ENCODE measurements at regions of chr5 and their contacts with region 1.

Region 1: DNA sequence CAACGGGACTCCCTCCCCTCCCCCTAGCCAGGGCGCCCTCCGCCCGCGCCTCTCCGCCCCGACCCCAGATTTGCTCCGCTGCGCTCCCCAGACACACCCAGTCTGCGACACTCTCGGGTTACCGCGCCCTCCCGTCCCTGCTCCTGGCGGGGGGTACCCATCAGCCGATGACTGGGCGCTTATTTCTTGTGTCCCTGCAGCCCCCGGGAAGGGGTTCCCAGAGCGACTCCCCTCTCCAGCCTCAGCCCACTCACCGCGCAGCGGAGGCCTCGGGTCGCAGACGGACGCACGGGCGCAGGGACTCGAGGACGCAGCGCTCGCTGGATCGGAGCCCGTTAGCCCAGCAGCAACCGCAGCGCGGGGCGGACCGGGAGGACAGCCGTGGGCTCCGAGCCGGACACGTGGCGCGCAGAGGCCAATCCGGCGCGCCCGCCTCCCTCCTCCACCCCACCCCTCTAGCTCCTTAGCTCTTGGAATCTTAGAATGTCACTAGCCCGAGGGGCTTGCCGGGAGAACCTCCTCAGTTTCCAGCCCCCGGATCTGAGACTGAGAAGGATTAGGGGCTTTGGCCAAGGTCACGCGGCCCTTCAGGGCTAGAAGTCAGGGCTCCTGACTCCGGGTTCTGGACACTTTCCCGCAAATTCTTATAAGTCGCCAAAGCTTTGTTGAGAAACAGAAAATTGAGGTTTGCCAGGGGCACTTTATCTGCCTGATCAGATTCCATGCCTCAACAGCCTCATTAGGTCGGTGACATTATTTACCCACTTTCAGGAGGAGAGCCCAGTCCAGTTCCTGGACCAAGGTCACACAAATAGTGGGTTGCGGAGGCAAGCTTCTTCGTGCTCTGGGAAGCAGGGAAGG is at the start of gene ANXA6:
- DNase-seq: peak; percentile 92
- H3K4me3 Mint-ChIP-seq: peak within 1 kb of the TSS; percentile 98
- H3K27ac Mint-ChIP-seq: peak within 1 kb of the TSS; percentile 95
- H3K4me1 Mint-ChIP-seq: peaks cover 53% of the 10 kb centered on the region
- H3K27me3 Mint-ChIP-seq: no peaks in the 10 kb centered on the region
- total RNA-seq, gene ANXA6: 314 and 315 TPM in 2 replicates

Region 2: GRCh38 chr5:150789943-150790611 is 367.6 kb before region 1 on chr5:
- intact Hi-C with region 1: loop called (anchors 2 kb)
- DNase-seq: peak; percentile 89
- H3K4me3 Mint-ChIP-seq: peak overlapping the region; percentile 82
- H3K27ac Mint-ChIP-seq: peak overlapping the region; percentile 84
- H3K4me1 Mint-ChIP-seq: peaks cover 55% of the 10 kb centered on the region
- H3K27me3 Mint-ChIP-seq: no peaks in the 10 kb centered on the region

Region 3: GRCh38 chr5:150904479-150905318 is 253.0 kb before region 1 on chr5 and contains the start of gene ZNF300:
- intact Hi-C with region 1: no loop called
- DNase-seq: peak; percentile 68
- H3K4me3 Mint-ChIP-seq: peak within 1 kb of the TSS; percentile 74
- H3K27ac Mint-ChIP-seq: peak within 1 kb of the TSS; percentile 78
- H3K4me1 Mint-ChIP-seq: no peaks in the 10 kb centered on the region
- H3K27me3 Mint-ChIP-seq: no peaks in the 10 kb centered on the region
- total RNA-seq, gene ZNF300: 0.47 and 0.54 TPM in 2 replicates

Region 4: GRCh38 chr5:151030400-151030799 is 127.3 kb before region 1 on chr5:
- intact Hi-C with region 1: no loop called
- DNase-seq: no peak
- H3K4me3 Mint-ChIP-seq: no peak overlapping the region
- H3K27ac Mint-ChIP-seq: no peak overlapping the region
- H3K4me1 Mint-ChIP-seq: peaks cover 3% of the 10 kb centered on the region
- H3K27me3 Mint-ChIP-seq: no peaks in the 10 kb centered on the region

Region 5: DNA sequence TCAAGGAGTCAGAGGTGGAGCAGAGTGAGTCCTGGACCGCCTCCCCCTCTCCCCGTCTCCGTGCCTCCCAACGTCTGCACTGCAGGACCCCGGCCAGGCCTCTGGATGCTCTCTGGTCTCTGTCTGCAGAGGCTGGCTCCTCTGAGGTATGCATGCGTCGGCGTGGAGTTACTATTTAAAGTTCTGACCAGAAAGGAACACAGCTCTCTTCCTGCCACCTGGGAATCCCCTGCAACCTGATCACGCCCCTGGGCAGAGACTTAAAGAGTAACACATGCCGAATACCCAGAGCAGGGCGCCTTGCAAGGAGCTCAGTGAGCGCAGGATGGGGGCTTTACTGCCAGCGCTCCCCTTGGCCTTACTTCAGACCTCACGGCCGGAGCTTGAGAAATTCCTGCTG is 16.1 kb before region 1 on chr5:
- intact Hi-C with region 1: loop called (anchors 2 kb)
- DNase-seq: peak; percentile 89
- H3K4me3 Mint-ChIP-seq: peak overlapping the region; percentile 86
- H3K27ac Mint-ChIP-seq: peak overlapping the region; percentile 87
- H3K4me1 Mint-ChIP-seq: peaks cover 79% of the 10 kb centered on the region
- H3K27me3 Mint-ChIP-seq: no peaks in the 10 kb centered on the region

Region 6: GRCh38 chr5:151202381-151203139 is 44.9 kb after region 1 on chr5:
- intact Hi-C with region 1: loop called (anchors 2 kb)
- DNase-seq: no peak
- H3K4me3 Mint-ChIP-seq: peak overlapping the region; percentile 50
- H3K27ac Mint-ChIP-seq: peak overlapping the region; percentile 80
- H3K4me1 Mint-ChIP-seq: peaks cover 32% of the 10 kb centered on the region
- H3K27me3 Mint-ChIP-seq: no peaks in the 10 kb centered on the region

Region 7: DNA sequence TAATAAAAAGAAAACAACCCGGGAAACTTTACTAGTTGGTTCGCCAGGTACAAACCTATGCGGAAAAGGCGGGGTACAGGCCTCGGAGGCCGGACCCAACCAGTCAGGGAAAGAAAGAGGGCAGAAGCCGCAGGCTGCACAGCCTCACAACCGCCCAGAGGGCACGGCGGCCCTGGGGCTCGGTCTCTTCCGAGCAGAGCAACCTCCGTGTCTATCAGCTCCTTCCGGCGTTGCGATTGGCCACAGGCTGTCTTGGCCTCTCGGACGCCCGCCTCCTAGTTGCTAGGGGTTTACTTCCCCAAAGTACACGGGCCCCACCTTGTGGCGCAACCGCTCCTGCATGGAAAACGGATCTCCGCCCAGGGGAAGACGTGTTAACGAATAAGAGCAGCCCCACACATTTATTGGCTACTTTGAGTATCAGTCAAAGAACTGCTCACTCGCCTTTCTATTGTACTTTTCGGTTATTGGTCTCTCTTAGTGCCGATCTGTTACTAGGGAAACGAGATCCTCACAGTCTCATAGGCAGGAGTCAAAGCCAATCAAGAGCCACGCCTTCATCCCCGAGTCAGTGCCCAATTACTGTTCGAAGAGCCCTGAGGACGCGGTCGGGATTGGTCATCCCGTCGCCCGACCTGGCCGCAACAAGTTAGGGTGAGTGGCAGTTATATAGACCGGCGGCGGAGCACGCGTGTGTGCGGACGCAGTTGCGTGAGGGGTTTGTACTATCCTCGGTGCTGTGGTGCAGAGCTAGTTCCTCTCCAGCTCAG is 613.8 kb after region 1 on chr5 and contains the start of gene G3BP1:
- intact Hi-C with region 1: loop called (anchors 10 kb)
- DNase-seq: peak; percentile 100
- H3K4me3 Mint-ChIP-seq: peak within 1 kb of the TSS; percentile 98
- H3K27ac Mint-ChIP-seq: peak within 1 kb of the TSS; percentile 92
- H3K4me1 Mint-ChIP-seq: peaks cover 30% of the 10 kb centered on the region
- H3K27me3 Mint-ChIP-seq: no peaks in the 10 kb centered on the region
- total RNA-seq, gene G3BP1: 362 and 367 TPM in 2 replicates